Activated T-helper 1 cell treated with anti-CD3 and anti-CD28 coated beads, Interleukin-12 subunit alpha, Interleukin-12 subunit beta, Interleukin-2, Interleukin-4 antibody, amounts not matched to agents 30 ng/mL and 10 ng/mL and 1 ng/mL, durations not matched to agents 14 hours and 24 hours and 36 hours (primary cell): ENCODE measurements at regions of chr18 and their contacts with region 1.

Region 1: DNA sequence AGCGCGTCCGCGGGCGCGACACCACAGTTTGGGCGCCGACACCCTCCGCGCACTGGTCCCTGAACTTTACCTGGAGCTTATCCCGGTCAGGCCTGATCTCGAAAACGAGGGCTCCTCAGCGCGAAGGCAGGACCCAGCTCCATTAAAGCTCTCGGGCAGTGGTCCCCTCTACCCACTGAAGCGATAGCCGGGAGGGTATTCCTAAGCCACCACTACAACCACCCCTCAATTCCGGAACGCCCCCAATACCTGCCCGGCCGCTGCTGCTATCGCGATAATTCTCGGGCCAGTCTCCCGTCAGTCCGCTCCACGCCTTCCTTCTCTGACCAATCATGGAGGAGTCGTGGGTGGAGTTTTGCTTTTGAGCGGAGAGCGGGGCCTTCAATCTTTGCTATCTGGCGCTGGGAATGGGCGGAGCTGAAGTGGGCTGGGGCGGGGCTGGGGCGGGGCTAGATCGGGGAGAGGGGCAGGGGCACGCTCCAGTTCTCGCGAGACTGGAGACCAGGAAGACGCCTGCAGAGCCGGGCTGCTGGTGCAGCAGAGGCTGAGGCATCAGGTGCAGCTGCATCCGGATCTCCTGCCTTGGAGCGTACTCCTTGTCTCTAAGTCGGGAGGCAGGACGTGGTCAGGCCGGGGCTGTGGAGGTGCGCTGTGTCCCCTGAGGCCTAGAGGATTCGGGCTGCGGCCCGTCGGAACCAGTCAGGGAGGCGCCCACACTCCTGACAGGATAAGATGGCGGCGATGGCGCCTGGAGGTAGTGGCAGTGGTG is at the starts of genes PIGN and RELCH:
- DNase-seq: peak; percentile 93
- H3K4me3 Mint-ChIP-seq: peak within 1 kb of the TSS; percentile 99
- H3K27ac Mint-ChIP-seq: peak within 1 kb of the TSS; percentile 96
- H3K4me1 Mint-ChIP-seq: peaks cover 68% of the 10 kb centered on the region
- H3K27me3 Mint-ChIP-seq: no peaks in the 10 kb centered on the region
- total RNA-seq, gene PIGN: 28.5 and 36.1 TPM in 2 replicates
- total RNA-seq, gene RELCH: 32.6 and 34.5 TPM in 2 replicates

Region 2: GRCh38 chr18:61972389-61973264 is 214.3 kb before region 1 on chr18:
- intact Hi-C with region 1: loop called (anchors 5 kb)
- DNase-seq: no peak
- H3K4me3 Mint-ChIP-seq: no peak overlapping the region
- H3K27ac Mint-ChIP-seq: peak overlapping the region; percentile 27
- H3K4me1 Mint-ChIP-seq: peaks cover 36% of the 10 kb centered on the region
- H3K27me3 Mint-ChIP-seq: peaks cover 2% of the 10 kb centered on the region

Region 3: GRCh38 chr18:62224229-62224628 is 37.3 kb after region 1 on chr18:
- intact Hi-C with region 1: no loop called
- DNase-seq: no peak
- H3K4me3 Mint-ChIP-seq: no peak overlapping the region
- H3K27ac Mint-ChIP-seq: no peak overlapping the region
- H3K4me1 Mint-ChIP-seq: no peaks in the 10 kb centered on the region
- H3K27me3 Mint-ChIP-seq: no peaks in the 10 kb centered on the region

Region 4: GRCh38 chr18:62324917-62325805 is 138.2 kb after region 1 on chr18 and contains the start of gene TNFRSF11A:
- intact Hi-C with region 1: loop called (anchors 1 kb)
- DNase-seq: peak; percentile 62
- H3K4me3 Mint-ChIP-seq: peak within 1 kb of the TSS; percentile 97
- H3K27ac Mint-ChIP-seq: peak within 1 kb of the TSS; percentile 87
- H3K4me1 Mint-ChIP-seq: peaks cover 62% of the 10 kb centered on the region
- H3K27me3 Mint-ChIP-seq: peaks cover 34% of the 10 kb centered on the region
- total RNA-seq, gene TNFRSF11A: 22.9 and 27.1 TPM in 2 replicates

Region 5: GRCh38 chr18:62584241-62585120 is 397.5 kb after region 1 on chr18:
- intact Hi-C with region 1: loop called (anchors 1 kb)
- DNase-seq: peak; percentile 75
- H3K4me3 Mint-ChIP-seq: peak overlapping the region; percentile 0
- H3K27ac Mint-ChIP-seq: peak overlapping the region; percentile 61
- H3K4me1 Mint-ChIP-seq: peaks cover 44% of the 10 kb centered on the region
- H3K27me3 Mint-ChIP-seq: no peaks in the 10 kb centered on the region

Region 6: GRCh38 chr18:63367053-63367953 is 1180.3 kb after region 1 on chr18 and contains the start of gene KDSR:
- intact Hi-C with region 1: loop called (anchors 5 kb)
- DNase-seq: peak; percentile 82
- H3K4me3 Mint-ChIP-seq: peak within 1 kb of the TSS; percentile 93
- H3K27ac Mint-ChIP-seq: peak within 1 kb of the TSS; percentile 83
- H3K4me1 Mint-ChIP-seq: peaks cover 44% of the 10 kb centered on the region
- H3K27me3 Mint-ChIP-seq: no peaks in the 10 kb centered on the region
- total RNA-seq, gene KDSR: 72.2 and 83.5 TPM in 2 replicates